ENCODE measurements at regions of chr9 and their contacts with region 1.

Region 1: GRCh38 chr9:87479801-87480201 is 17.9 kb upstream of the DAPK1 start:
- H3K4me3 Mint-ChIP-seq: peak overlapping the region; percentile 34
- H3K27ac Mint-ChIP-seq: peak overlapping the region; percentile 74
- H3K4me1 Mint-ChIP-seq: peaks cover 28% of the 10 kb centered on the region
- H3K27me3 Mint-ChIP-seq: no peaks in the 10 kb centered on the region

Region 2: DNA sequence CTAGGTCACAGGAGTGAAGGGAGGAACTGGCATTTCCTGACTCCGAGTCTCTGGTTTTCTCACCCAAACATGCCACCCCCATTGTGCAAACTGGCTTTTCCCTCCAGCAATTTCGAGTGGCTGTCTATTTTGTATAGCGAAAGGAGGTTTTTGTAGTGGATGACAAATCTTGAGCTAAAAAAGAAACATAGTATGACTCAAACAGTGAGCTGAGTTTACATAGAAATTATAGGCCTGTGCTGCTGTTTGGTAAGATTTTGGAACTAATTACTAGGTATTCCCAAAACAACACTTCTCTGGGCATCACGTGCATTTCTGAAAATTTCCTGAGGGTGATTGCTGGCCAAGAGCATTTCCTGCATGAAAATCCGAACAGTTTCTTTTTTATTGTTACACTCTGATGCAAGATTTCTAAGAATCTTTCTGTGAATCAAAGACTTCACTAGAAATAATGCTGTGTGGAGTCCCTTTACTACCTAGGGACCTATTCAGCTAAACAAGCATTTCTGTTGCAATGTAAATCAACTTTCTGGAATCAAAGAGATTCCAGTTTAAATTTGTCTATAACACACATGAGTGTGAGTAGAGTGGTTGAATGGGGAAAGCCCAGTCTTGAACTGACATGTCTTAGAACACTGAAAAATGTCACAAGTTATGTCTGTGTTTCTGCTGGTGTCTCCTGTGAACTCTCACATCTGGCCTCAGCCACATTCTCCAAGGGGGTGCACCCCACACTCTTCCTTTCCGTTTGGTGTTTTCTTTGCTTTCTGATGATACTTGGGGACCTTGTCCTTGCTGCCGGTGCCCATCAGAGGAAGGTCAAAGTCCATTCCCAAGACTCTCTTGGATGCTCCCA is 15.5 kb before region 1 on chr9:
- intact Hi-C with region 1: loop called (anchors 1 kb)
- H3K4me3 Mint-ChIP-seq: no peak overlapping the region
- H3K27ac Mint-ChIP-seq: peak overlapping the region; percentile 31
- H3K4me1 Mint-ChIP-seq: peaks cover 13% of the 10 kb centered on the region
- H3K27me3 Mint-ChIP-seq: no peaks in the 10 kb centered on the region

Measured in dendritic cell treated with granulocyte-macrophage colony-stimulating factor and Interleukin-4, amounts not matched to agents 40 ng/mL and 50 ng/mL, for 4 days (primary cell).